Activated T-helper 1 cell treated with anti-CD3 and anti-CD28 coated beads, Interleukin-12 subunit alpha, Interleukin-12 subunit beta, Interleukin-2, Interleukin-4 antibody, amounts not matched to agents 30 ng/mL and 10 ng/mL and 1 ng/mL, durations not matched to agents 14 hours and 24 hours and 36 hours (primary cell): ENCODE measurements at regions of chrX and their contacts with region 1.

Region 1: GRCh38 chrX:107118322-107119147 is at the start of gene RBM41:
- DNase-seq: peak; percentile 64
- H3K4me3 Mint-ChIP-seq: peak within 1 kb of the TSS; percentile 100
- H3K27ac Mint-ChIP-seq: peak within 1 kb of the TSS; percentile 99
- H3K4me1 Mint-ChIP-seq: peaks cover 41% of the 10 kb centered on the region
- H3K27me3 Mint-ChIP-seq: no peaks in the 10 kb centered on the region
- total RNA-seq, gene RBM41: 15.5 and 16.6 TPM in 2 replicates

Region 2: DNA sequence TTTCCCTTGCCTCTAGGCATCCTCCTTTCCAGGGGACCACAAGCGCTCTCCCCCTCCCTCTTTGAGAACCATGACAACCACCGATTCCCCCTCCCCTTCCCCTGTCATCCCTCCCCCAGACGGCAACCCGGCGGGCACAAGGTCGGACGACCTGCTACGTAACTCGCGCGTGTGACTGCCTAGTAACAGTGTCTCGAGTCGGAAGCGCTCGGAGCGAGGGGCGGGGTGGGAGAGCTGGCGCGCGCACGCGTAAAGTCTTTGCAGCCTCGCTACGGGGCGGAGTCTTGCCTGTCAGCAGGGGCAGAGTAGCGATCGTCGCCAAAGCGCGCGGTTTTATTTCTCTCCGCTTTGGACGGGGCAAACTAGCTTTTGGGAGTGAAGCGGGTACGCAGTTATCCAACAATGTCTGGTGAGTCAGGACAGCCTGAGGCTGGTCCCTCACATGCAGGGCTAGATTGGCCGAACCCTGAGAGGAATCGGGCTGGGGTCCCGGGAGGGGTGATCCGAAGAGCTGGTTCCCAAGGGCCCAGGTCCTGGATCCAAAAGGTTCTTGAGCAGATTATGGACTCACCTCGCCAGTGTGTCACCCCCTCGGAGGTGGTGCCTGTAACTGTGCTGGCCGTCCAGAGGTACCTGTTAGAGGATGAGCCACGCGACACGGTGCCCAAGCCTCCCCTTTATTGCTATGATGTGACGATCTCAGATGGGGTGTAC is 506.7 kb before region 1 on chrX and contains the start of gene RADX:
- intact Hi-C with region 1: loop called (anchors 2 kb)
- DNase-seq: peak; percentile 82
- H3K4me3 Mint-ChIP-seq: peak within 1 kb of the TSS; percentile 93
- H3K27ac Mint-ChIP-seq: peak within 1 kb of the TSS; percentile 89
- H3K4me1 Mint-ChIP-seq: peaks cover 26% of the 10 kb centered on the region
- H3K27me3 Mint-ChIP-seq: no peaks in the 10 kb centered on the region
- total RNA-seq, gene RADX: 5.6 and 6.3 TPM in 2 replicates

Region 3: DNA sequence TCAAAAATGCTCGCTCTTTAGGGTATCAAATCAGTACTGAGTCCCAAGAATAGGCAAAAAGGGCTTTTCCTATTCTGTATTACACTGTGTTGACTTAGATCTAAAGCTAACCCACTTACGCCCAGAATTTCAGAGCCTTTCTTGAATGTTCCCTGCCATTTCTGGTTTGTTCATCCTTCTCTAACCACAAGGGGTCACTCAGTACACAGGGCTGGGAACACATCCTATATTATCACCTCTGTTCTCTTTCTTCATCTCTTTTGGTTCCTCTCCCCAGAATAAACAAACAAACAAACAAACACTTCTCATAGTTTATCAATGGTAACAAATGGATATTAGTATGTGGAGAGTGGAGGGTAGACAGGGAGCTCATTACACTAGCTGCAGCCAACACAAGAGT is 93.0 kb before region 1 on chrX:
- intact Hi-C with region 1: no loop called
- DNase-seq: no peak
- H3K4me3 Mint-ChIP-seq: no peak overlapping the region
- H3K27ac Mint-ChIP-seq: no peak overlapping the region
- H3K4me1 Mint-ChIP-seq: no peaks in the 10 kb centered on the region
- H3K27me3 Mint-ChIP-seq: no peaks in the 10 kb centered on the region

Region 4: GRCh38 chrX:107135049-107135964 is 16.8 kb after region 1 on chrX:
- intact Hi-C with region 1: loop called (anchors 2 kb)
- DNase-seq: no peak
- H3K4me3 Mint-ChIP-seq: peak overlapping the region; percentile 13
- H3K27ac Mint-ChIP-seq: no peak overlapping the region
- H3K4me1 Mint-ChIP-seq: peaks cover 9% of the 10 kb centered on the region
- H3K27me3 Mint-ChIP-seq: no peaks in the 10 kb centered on the region

Region 5: GRCh38 chrX:107154787-107155620 is 36.5 kb after region 1 on chrX:
- intact Hi-C with region 1: loop called (anchors 5 kb)
- DNase-seq: no peak
- H3K4me3 Mint-ChIP-seq: peak overlapping the region; percentile 79
- H3K27ac Mint-ChIP-seq: peak overlapping the region; percentile 61
- H3K4me1 Mint-ChIP-seq: peaks cover 5% of the 10 kb centered on the region
- H3K27me3 Mint-ChIP-seq: no peaks in the 10 kb centered on the region

Region 6: GRCh38 chrX:107205770-107206696 is 87.5 kb after region 1 on chrX and contains the starts of genes DNAAF6 and NUP62CL:
- intact Hi-C with region 1: loop called (anchors 1 kb)
- DNase-seq: peak; percentile 49
- H3K4me3 Mint-ChIP-seq: peak within 1 kb of the TSS; percentile 87
- H3K27ac Mint-ChIP-seq: peak within 1 kb of the TSS; percentile 56
- H3K4me1 Mint-ChIP-seq: peaks cover 7% of the 10 kb centered on the region
- H3K27me3 Mint-ChIP-seq: peaks cover 2% of the 10 kb centered on the region
- total RNA-seq, gene DNAAF6: not detected in 2 replicates
- total RNA-seq, gene NUP62CL: 0.54 and 1.1 TPM in 2 replicates

Region 7: DNA sequence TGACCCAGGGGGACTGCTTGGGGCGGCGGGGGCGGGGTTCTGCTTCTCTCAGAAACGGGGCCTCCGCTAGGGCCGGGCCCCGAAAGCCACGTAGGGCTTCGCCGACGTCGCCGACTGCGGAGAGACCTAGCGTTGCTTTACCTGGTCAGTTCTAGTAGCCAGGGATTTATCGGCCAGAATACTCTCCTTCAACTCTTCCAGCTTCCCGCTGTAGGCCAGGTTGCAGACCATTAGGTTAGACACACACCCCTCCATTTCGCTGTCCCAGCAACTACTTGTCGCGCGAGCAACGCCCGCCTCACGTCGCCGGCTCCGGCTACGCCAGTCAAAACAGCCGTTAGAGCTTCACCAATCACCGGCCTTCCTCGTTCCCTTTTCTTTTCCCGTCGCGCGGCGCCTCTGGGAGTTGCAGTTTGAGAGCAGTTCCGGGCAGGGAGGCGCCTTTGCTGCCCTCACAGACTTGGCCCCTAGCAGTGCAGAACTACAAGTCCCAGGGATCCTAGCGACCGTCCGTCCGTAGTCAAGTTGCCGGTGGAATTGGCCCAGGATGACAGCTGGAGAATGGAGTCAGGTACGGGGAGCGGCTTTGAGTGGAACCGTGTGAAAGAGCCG is 972.8 kb after region 1 on chrX and contains the starts of genes ATG4A and PSMD10:
- intact Hi-C with region 1: loop called (anchors 1 kb)
- DNase-seq: peak; percentile 85
- H3K4me3 Mint-ChIP-seq: no peak within 1 kb of the TSS
- H3K27ac Mint-ChIP-seq: no peak within 1 kb of the TSS
- H3K4me1 Mint-ChIP-seq: peaks cover 17% of the 10 kb centered on the region
- H3K27me3 Mint-ChIP-seq: no peaks in the 10 kb centered on the region
- total RNA-seq, gene ATG4A: 9.6 and 9.8 TPM in 2 replicates
- total RNA-seq, gene PSMD10: 42.5 and 44.1 TPM in 2 replicates